Heart left ventricle (tissue), 16 donors: ENCODE measurements at regions of chr1 and their contacts with region 1.

Region 1: DNA sequence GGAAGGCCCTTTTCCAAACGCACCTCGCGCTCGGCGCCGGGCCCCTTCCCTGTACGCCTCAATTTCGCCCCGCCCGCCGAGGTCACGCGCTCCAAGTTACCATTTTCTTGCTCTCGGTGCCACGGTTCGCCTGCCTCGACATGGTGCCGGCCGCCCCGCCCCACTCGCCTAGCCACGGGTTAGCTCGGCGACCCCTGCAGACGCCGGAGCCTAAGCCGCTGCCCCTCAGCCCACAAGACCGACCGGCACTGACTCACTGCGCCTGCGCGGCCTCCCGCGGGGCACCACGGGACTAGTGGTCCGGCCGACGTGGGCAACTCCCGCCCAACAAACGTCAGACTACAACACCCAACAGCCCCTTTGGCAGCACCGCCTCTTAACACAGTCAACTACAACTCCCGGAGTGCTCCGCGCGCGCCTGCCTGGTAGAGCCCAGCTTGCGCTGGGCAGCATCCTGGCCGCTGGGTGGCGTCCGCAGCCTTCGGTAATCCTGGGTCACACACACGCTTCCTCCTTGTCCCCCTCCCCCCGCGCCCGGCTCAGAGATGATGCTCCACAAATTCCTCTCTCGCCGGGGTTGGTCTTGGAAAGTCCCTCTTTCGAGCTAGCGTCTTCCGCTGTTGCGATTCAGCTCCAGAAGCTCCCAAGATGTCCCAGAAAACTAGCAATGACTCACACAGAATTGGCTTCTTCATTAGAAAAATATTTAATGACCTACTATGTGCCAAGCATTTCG is at the start of gene TRAPPC3:
- DNase-seq: peak; percentile 100
- ATAC-seq: peak; percentile 90 to 95 (median 92)
- H3K4me3 ChIP-seq: peak within 1 kb of the TSS; percentile 57 to 98 (median 84)
- H3K27ac ChIP-seq: peak within 1 kb of the TSS; percentile 90 to 99 (median 96)
- H3K4me1 ChIP-seq: peaks cover 7 to 62% (median 48%) of the 10 kb centered on the region in 12 donors
- H3K27me3 ChIP-seq: no peaks in the 10 kb centered on the region
- CTCF ChIP-seq: peak; percentile 88 to 100 (median 96)
- POLR2A ChIP-seq: peak in 1 of 2 donors; percentile 93
- total RNA-seq, gene TRAPPC3: 45.3 to 77.2 (median 52.9) TPM

Region 2: GRCh38 chr1:36187800-36188593 is 38.6 kb after region 1 on chr1:
- intact Hi-C with region 1: loop called (anchors 1 to 5 kb)
- DNase-seq: peak; percentile 86 to 92 (median 88)
- ATAC-seq: peak; percentile 89 to 97 (median 94)
- H3K4me3 ChIP-seq: no peak overlapping the region
- H3K27ac ChIP-seq: peak overlapping the region; percentile 72 to 90 (median 84)
- H3K4me1 ChIP-seq: peaks cover 0 to 15% (median 9%) of the 10 kb centered on the region in 12 donors
- H3K27me3 ChIP-seq: no peaks in the 10 kb centered on the region
- CTCF ChIP-seq: peak; percentile 69 to 94 (median 88)
- POLR2A ChIP-seq: peak in 1 of 2 donors; percentile 36

Region 3: DNA sequence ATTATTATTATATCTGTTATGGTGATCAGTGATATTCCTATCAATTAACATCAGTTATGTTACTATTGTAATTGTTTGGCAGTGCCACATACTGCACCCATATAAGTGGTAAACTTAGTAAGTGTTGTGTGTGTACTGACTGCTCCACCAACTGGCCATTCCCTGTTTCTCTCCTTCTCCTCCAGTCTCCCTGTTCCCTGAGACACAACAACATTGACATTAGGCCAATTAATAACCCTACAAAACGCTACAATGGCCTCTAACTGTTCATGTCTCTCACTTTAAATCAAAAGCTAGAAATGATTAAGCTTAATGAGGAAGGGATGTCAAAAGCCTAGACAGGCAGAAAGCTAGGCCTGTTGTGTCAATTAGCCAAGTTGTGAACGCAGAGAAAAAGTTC is 68.3 kb after region 1 on chr1:
- intact Hi-C with region 1: loop called in 4 of 10 experiments (anchors 2 to 5 kb)
- DNase-seq: no peak
- ATAC-seq: peak; percentile 73 to 80 (median 75)
- H3K4me3 ChIP-seq: no peak overlapping the region
- H3K27ac ChIP-seq: peak overlapping the region in 3 of 12 donors; percentile 28 to 39 (median 38)
- H3K4me1 ChIP-seq: peaks cover 0 to 10% (median 2%) of the 10 kb centered on the region in 12 donors
- H3K27me3 ChIP-seq: no peaks in the 10 kb centered on the region
- CTCF ChIP-seq: peak in 10 of 12 donors; percentile 10 to 53 (median 36)
- POLR2A ChIP-seq: no peak